ENCODE measurements at regions of chr14 and their contacts with region 1.

Region 1: DNA sequence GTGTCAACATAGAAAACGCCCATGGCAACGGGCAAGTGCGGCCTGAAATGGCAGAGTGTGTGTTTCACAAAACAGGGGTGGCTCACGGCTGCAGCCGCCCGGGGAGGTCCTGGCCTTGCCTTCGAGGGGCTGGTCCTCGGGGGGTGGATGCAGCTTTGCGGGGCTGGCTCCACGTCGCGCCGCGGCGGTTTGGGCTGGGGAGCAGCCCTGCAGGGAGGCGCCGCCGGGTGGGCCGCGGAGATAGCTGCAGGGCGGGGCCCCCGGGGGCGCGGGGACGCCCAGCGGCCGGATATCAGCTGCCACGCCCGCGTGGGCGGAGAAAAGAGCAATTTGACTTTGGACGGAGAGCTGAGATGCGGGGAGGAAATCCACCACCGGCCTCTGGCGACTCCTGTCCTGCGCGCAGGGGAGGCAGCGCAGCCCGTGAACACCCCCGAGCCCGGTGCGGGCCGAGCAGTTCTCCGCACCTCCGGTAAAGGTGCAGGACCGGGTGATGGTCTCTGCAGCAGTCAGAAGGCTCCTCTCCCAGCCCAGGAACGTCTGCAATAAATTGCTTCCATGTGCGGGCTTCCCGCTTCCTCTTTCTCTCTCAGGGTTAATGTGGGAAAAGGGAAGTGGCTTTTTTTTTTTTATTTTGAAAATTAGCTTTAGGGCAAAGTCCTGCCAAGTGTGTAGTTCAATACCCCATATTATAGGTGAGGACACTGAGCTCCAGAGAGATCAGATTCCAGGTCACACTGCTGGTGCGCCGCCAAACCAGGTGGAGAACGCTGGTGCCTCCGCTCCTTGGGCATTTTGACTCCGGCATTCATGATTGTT is 110.5 kb downstream of the ARF6 start:
- DNase-seq: peak; percentile 86
- H3K4me3 ChIP-seq: peak overlapping the region; percentile 29 to 63 (median 54)
- H3K27ac ChIP-seq: peak overlapping the region; percentile 78 to 86 (median 82)
- H3K4me1 ChIP-seq: peaks cover 0 to 52% (median 46%) of the 10 kb centered on the region in 4 donors
- H3K27me3 ChIP-seq: no peaks in the 10 kb centered on the region
- CTCF ChIP-seq: no peak
- EP300 ChIP-seq: no peak
- POLR2A ChIP-seq: peak in 1 of 2 donors; percentile 31

Region 2: GRCh38 chr14:49852301-49853157 is 150.9 kb before region 1 on chr14 and contains the start of gene NEMF:
- intact Hi-C with region 1: loop called (anchors 5 kb)
- DNase-seq: peak; percentile 92
- H3K4me3 ChIP-seq: peak within 1 kb of the TSS; percentile 60 to 78 (median 74)
- H3K27ac ChIP-seq: peak within 1 kb of the TSS; percentile 86 to 90 (median 88)
- H3K4me1 ChIP-seq: peaks cover 0 to 31% (median 21%) of the 10 kb centered on the region in 4 donors
- H3K27me3 ChIP-seq: no peaks in the 10 kb centered on the region
- CTCF ChIP-seq: peak; percentile 66 to 93 (median 80)
- EP300 ChIP-seq: no peak
- POLR2A ChIP-seq: peak; percentile 72 to 84
- total RNA-seq, gene NEMF: 73.7 to 121 (median 79.0) TPM

Region 3: GRCh38 chr14:50116181-50116956 is 112.9 kb after region 1 on chr14 and contains the start of gene VCPKMT:
- intact Hi-C with region 1: no loop called
- DNase-seq: peak; percentile 97
- H3K4me3 ChIP-seq: peak within 1 kb of the TSS; percentile 55 to 86 (median 78)
- H3K27ac ChIP-seq: peak within 1 kb of the TSS; percentile 81 to 92 (median 88)
- H3K4me1 ChIP-seq: peaks cover 0 to 24% (median 17%) of the 10 kb centered on the region in 4 donors
- H3K27me3 ChIP-seq: no peaks in the 10 kb centered on the region
- CTCF ChIP-seq: no peak
- EP300 ChIP-seq: peak in 1 of 4 donors; percentile 48
- POLR2A ChIP-seq: peak; percentile 77 to 79
- total RNA-seq, gene VCPKMT: 7.8 to 12.2 (median 9.4) TPM

Region 4: GRCh38 chr14:50139192-50139591 is 135.8 kb after region 1 on chr14:
- intact Hi-C with region 1: no loop called
- DNase-seq: no peak
- H3K4me3 ChIP-seq: no peak overlapping the region
- H3K27ac ChIP-seq: no peak overlapping the region
- H3K4me1 ChIP-seq: no peaks in the 10 kb centered on the region
- H3K27me3 ChIP-seq: no peaks in the 10 kb centered on the region
- CTCF ChIP-seq: no peak
- EP300 ChIP-seq: no peak
- POLR2A ChIP-seq: no peak

Measured in sigmoid colon (tissue), 7 donors.